Vagina (tissue), 2 donors: ENCODE measurements at regions of chr20 and their contacts with region 1.

Region 1: DNA sequence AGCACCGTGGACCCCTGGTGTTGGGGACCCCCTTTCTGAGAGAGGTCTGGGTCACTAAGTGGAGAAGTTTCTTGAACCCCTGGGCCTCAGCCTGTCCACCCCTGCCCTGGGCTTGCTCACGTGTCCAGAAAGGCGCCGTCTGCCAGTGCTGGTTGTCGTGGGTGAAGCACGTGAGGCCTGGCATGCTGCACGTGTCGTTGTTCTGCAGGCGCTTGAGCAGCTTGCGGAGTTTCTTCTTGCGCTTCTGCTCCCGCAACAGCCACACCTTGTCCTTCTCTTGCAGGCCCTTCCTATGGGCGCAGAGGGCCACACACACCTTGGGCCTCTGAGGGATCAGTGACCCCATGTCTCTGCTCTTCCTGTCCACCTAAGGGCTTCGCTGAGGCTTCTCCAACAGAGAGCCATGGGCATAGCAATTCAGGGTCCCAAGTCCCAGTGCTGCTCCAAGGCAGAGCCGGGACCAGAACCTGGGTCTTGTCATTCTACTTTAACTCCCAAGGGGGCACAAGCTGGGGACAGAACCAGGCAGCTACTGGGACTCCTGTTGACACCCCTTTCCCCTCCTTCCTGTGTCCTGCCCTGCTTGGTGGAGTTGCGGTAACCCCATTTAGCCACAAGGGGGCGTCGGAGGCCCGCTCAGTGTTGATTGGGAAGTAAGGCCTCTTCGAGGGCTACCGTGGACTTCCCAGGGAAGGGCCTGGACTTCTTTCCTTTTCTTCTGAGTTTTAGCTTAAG is 121.8 kb downstream of the SULF2 start:
- DNase-seq: no peak
- H3K4me3 ChIP-seq: no peak overlapping the region
- H3K27ac ChIP-seq: peak overlapping the region; percentile 42
- H3K4me1 ChIP-seq: peaks cover 11% of the 10 kb centered on the region
- H3K27me3 ChIP-seq: no peaks in the 10 kb centered on the region
- CTCF ChIP-seq: peak; percentile 92 to 95 (median 94)
- POLR2A ChIP-seq: no peak

Region 2: GRCh38 chr20:48620519-48621254 is 957.2 kb after region 1 on chr20:
- intact Hi-C with region 1: loop called (anchors 5 kb)
- DNase-seq: no peak
- H3K4me3 ChIP-seq: peak overlapping the region; percentile 2 to 17
- H3K27ac ChIP-seq: no peak overlapping the region
- H3K4me1 ChIP-seq: peaks cover 13% of the 10 kb centered on the region
- H3K27me3 ChIP-seq: no peaks in the 10 kb centered on the region
- CTCF ChIP-seq: peak; percentile 75 to 99 (median 89)
- POLR2A ChIP-seq: no peak